Psoas muscle (tissue), 8 donors: ENCODE measurements at regions of chr12 and their contacts with region 1.

Region 1: DNA sequence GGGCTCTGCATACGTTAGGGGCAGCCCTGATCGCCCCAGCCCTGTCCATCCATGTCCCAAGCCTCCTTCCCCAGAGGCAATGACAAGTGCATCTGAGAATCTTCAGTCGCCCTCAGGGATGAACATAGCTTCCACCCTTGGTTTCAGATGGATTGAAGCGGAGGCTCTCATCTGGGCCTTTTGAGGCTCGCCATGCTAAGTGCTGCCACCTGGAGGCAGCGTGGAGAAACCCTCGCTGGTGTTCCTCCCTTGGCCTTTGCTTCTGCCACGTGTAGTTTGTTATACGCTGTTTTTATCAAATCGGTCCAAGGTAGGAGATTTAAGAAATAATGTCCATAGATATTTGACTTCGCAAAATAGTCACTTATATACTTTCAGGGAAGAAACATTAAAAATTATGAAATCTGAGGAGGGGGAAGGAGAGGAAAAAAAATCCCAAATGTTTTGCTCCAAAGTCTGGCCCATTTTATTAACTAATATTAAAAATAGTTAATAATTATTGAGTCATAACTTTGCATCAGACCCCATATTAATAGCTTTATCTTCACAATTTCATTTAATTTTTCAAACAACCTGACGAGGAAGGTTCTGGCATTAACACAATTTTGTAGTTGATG is 28.8 kb upstream of the LRRC10 start:
- DNase-seq: peak; percentile 53 to 77
- ATAC-seq: peak; percentile 28 to 57 (median 38)
- H3K4me3 ChIP-seq: no peak overlapping the region
- H3K27ac ChIP-seq: no peak overlapping the region
- H3K4me1 ChIP-seq: peaks cover 14% of the 10 kb centered on the region
- H3K27me3 ChIP-seq: no peaks in the 10 kb centered on the region
- CTCF ChIP-seq: peak; percentile 86

Region 2: DNA sequence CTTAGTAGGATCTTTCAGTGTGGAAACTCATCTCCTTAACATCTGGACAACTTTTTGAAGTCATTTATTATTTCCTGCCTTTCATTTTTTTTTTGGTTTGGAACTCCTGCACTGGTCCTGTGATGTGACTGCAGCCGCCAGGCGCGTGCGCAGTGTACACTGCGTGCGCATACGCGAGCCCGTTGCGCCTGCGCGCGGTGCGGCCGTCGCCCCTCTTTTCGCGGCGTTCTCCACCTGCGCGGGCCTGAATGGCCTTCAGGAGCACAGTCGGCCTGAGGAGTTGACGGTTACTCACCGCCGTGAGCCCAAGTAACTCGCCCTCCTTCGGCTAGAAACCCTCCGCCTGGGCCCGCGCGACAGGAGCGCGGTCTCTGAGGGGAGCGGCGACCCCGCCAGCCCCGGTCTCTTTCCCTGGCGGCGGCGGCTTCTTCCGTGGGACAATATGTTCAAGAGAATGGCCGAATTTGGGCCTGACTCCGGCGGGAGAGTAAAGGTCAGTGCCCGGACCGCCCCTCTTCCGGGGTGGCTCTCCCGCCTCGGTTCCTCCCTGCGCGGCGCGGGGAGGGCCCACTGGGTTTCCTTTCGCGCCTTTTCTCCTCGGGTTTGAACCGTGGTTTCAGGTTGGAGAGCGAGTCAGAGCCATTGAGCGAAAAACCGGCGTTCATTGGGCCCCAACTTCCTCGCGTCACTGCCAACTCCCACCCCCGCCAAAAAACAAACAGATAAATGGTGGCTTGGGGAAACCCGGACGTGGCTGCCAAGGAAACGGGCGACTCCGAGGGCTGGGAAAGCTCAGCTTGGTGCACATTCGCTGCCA is 279.8 kb before region 1 on chr12 and contains the start of gene YEATS4:
- intact Hi-C with region 1: loop called in 1 of 2 experiments (anchors 2 kb)
- DNase-seq: peak; percentile 83 to 91
- ATAC-seq: peak; percentile 97 to 99 (median 98)
- H3K4me3 ChIP-seq: peak within 1 kb of the TSS; percentile 74
- H3K27ac ChIP-seq: peak within 1 kb of the TSS; percentile 82
- H3K4me1 ChIP-seq: peaks cover 13% of the 10 kb centered on the region
- H3K27me3 ChIP-seq: no peaks in the 10 kb centered on the region
- CTCF ChIP-seq: no peak
- total RNA-seq, gene YEATS4: 6.2 to 12.4 (median 9.5) TPM

Region 3: GRCh38 chr12:69585189-69586062 is 54.1 kb before region 1 on chr12 and contains the start of gene CCT2:
- intact Hi-C with region 1: loop called in 1 of 2 experiments (anchors 5 kb)
- DNase-seq: peak; percentile 97 to 99
- ATAC-seq: peak; percentile 99 to 100 (median 100)
- H3K4me3 ChIP-seq: peak within 1 kb of the TSS; percentile 95
- H3K27ac ChIP-seq: peak within 1 kb of the TSS; percentile 96
- H3K4me1 ChIP-seq: peaks cover 10% of the 10 kb centered on the region
- H3K27me3 ChIP-seq: no peaks in the 10 kb centered on the region
- CTCF ChIP-seq: peak; percentile 40
- total RNA-seq, gene CCT2: 96.9 to 190 (median 149) TPM